ENCODE measurements at regions of chr3 and their contacts with region 1.

Region 1: DNA sequence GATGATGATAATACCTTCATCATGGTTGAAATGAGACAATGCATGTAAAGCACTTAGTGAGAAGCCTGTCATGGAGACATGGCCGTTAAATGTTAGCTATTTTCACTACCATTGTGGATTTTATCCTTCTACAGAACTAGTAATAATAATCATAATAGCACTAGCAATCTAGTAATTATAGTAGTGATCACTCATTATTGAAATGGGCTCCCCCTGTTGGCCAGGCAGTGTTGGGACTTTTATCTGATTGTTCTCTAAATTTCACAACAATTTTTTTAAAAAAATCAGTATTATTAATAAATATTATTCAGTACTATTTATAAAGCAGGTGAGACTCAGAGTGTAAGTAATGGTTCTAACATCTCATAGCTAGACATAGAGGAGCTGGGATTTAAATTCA is 396.3 kb downstream of the IL5RA start:
- H3K4me3 ChIP-seq: no peak overlapping the region
- H3K27ac ChIP-seq: no peak overlapping the region
- H3K4me1 ChIP-seq: peaks cover 9% of the 10 kb centered on the region
- CTCF ChIP-seq: no peak

Region 2: GRCh38 chr3:2701471-2701870 is 12.5 kb before region 1 on chr3:
- CTCF ChIA-PET with region 1: interaction called, 11 read pairs
- POLR2A ChIA-PET with region 1: no interaction called
- H3K4me3 ChIP-seq: no peak overlapping the region
- H3K27ac ChIP-seq: no peak overlapping the region
- H3K4me1 ChIP-seq: no peaks in the 10 kb centered on the region
- CTCF ChIP-seq: no peak

Region 3: GRCh38 chr3:2735392-2735894 is 21.5 kb after region 1 on chr3:
- CTCF ChIA-PET with region 1: interaction called, 10 read pairs
- POLR2A ChIA-PET with region 1: no interaction called
- H3K4me3 ChIP-seq: no peak overlapping the region
- H3K27ac ChIP-seq: no peak overlapping the region
- H3K4me1 ChIP-seq: no peaks in the 10 kb centered on the region
- CTCF ChIP-seq: no peak

Region 4: GRCh38 chr3:3119393-3119851 is 405.5 kb after region 1 on chr3:
- CTCF ChIA-PET with region 1: no interaction called
- POLR2A ChIA-PET with region 1: no interaction called
- H3K4me3 ChIP-seq: no peak overlapping the region
- H3K27ac ChIP-seq: no peak overlapping the region
- H3K4me1 ChIP-seq: no peaks in the 10 kb centered on the region; the same call in 1 of the 2 replicates
- CTCF ChIP-seq: no peak